Activated CD4-positive, alpha-beta T cell treated with anti-CD3 and anti-CD28 coated beads, Interleukin-2, amount 10 ng/mL, durations not matched to agents 24 days and 14 days (primary cell): ENCODE measurements at regions of chr15 and their contacts with region 1.

Region 1: GRCh38 chr15:51888593-51889195 is 59.2 kb downstream of the TMOD3 start:
- DNase-seq: no peak
- H3K4me3 Mint-ChIP-seq: no peak overlapping the region
- H3K27ac Mint-ChIP-seq: no peak overlapping the region
- H3K4me1 Mint-ChIP-seq: peaks cover 8% of the 10 kb centered on the region
- H3K27me3 Mint-ChIP-seq: no peaks in the 10 kb centered on the region

Region 2: GRCh38 chr15:51803961-51804360 is 84.7 kb before region 1 on chr15:
- intact Hi-C with region 1: no loop called
- DNase-seq: no peak
- H3K4me3 Mint-ChIP-seq: no peak overlapping the region
- H3K27ac Mint-ChIP-seq: no peak overlapping the region
- H3K4me1 Mint-ChIP-seq: no peaks in the 10 kb centered on the region
- H3K27me3 Mint-ChIP-seq: no peaks in the 10 kb centered on the region

Region 3: GRCh38 chr15:52139599-52140491 is 251.2 kb after region 1 on chr15:
- intact Hi-C with region 1: loop called (anchors 10 kb)
- DNase-seq: peak; percentile 90
- H3K4me3 Mint-ChIP-seq: no peak overlapping the region
- H3K27ac Mint-ChIP-seq: peak overlapping the region; percentile 41
- H3K4me1 Mint-ChIP-seq: peaks cover 5% of the 10 kb centered on the region
- H3K27me3 Mint-ChIP-seq: no peaks in the 10 kb centered on the region